Ascending aorta (tissue), 2 donors: ENCODE measurements at regions of chr12 and their contacts with region 1.

Region 1: GRCh38 chr12:121697098-121697698 is 15.4 kb upstream of the TMEM120B start:
- DNase-seq: no peak
- H3K4me3 ChIP-seq: no peak overlapping the region
- H3K27ac ChIP-seq: no peak overlapping the region
- H3K4me1 ChIP-seq: peaks cover 0 to 9% of the 10 kb centered on the region in 2 donors
- H3K27me3 ChIP-seq: no peaks in the 10 kb centered on the region
- CTCF ChIP-seq: peak; percentile 32 to 70 (median 55)

Region 2: DNA sequence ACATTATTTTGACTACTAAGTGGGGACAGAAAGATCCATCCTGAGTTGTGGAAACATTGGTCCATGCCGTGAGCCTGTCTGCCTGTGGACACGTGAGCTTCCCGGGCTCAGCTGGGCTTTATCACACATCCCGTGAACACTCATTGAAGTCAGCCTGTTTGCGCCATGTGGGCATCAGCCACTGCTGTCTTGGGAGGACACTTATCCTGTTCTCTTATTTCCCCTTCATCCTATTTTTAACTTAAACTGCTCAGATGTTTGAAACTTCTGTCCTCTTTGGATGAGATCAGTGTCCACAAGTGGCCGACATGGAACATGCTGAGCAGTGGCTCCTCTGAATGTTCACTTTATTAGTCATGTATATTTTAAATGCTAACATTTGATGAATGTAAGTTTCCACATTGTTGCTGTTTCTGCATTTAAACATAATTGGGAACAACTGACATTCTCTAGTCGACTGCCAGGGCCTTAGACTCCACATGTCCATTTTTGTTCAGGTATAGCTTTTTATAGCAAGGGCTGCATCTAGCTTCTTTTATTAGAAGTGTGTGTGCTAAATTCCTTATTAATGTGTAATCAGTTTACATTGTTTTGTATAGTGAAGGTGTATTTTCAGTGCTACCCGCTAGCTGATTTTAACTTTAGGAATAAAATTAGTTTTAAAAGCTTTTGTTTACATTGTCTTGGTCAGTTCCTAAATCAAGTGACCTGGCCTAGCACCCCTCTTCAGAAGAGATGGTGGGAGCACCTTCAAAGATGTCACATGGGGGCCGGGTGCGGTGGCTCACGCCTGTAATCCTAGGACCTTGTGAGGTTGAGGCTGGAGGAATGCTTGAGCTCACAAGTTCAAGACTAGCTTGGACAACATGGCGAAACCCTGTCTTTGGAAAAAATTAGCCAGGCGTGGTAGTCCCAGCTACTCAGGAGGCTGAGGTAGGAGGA is 273.2 kb before region 1 on chr12:
- intact Hi-C with region 1: no loop called
- DNase-seq: no peak
- H3K4me3 ChIP-seq: no peak overlapping the region
- H3K27ac ChIP-seq: no peak overlapping the region
- H3K4me1 ChIP-seq: no peaks in the 10 kb centered on the region
- H3K27me3 ChIP-seq: no peaks in the 10 kb centered on the region
- CTCF ChIP-seq: no peak

Region 3: DNA sequence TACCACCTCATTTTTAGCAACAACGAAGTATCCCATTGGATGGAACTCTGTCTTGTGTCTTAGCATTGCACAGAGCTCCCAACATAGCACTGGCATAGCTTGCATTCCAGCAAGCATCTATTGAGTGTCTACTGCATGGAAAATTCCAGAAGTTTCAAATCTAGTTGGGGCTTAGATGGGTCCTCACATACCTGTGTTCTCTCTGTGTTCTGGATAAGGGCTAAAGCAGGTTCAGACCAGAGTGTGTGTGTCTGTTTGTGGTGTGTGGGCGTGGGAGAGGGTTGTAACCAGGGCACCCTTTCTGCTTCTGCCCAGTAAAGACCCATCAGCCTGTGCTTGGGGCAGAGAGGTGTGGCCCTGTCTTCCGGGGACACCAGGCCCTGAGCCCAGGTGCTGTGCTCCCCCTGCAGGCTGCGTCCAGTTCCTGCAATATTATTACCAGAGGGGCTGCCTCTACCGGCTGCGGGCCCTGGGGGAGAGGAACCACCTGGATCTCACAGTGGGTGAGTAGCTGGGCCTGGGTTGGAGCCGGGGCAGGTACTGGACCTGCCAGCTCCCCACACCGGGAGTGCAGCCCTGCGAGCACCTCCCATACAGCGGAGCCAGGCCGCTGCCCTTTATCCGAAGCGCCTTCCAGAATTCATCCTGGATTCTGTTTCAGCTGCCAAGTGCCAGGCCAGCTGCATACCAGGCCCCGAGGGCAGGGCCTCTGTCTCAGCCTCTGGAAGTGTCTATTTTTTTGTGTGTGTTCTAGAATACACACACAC is 76.0 kb after region 1 on chr12:
- intact Hi-C with region 1: loop called (anchors 1 kb)
- DNase-seq: peak in 1 of 2 donors; percentile 72
- H3K4me3 ChIP-seq: peak overlapping the region in 1 of 2 donors; percentile 0
- H3K27ac ChIP-seq: no peak overlapping the region
- H3K4me1 ChIP-seq: peaks cover 2 to 9% of the 10 kb centered on the region in 2 donors
- H3K27me3 ChIP-seq: no peaks in the 10 kb centered on the region
- CTCF ChIP-seq: peak; percentile 79 to 86 (median 80)